Activated naive CD4-positive, alpha-beta T cell treated with anti-CD3 and anti-CD28 coated beads for 36 hours (primary cell): ENCODE measurements at regions of chr3 and their contacts with region 1.

Region 1: DNA sequence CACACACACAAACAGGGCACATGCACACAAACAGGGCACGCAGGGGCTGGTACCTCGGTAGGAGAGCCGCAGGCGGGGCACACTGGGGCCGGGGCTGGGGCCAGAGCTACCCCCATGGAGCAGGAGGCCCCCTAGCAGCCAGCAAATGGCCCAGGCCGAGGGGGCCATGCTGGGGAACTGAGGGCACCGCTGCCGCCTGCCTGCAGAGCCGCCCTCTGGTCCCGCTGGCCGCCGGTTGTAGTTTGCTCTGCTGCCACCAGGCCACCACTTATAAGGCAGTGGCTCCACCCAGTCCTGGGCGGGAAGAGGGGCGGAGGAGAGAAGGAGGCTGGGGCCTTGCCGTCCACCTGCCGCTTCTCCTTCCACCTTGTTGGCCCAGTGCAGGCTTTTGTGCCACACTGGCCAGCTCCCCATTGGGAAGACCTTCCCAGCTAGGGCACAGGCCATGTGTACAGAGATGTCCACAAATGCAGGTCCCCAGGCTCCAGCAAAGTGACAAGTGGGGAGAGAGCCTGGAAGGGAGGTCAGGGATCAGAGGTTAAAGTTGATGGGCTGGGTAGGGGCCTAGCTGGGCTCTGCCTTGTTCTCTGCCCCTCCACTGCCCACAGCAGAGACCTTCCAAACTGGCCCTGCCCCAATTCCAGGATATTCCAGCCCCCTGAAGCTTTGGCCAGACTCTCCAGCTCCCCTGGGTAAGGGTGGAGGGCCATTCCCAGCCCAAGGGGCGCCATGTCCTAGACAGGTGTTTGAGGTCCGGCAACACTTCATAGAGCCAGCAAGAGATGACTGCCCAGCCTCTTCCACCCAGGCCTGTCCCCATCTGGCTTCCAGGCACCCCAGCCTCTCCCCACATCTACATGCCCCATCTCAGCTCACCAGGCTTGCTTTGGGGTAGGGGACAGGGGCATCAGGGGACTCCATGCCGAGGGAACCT is at the start of gene SEMA3G:
- DNase-seq: peak; percentile 80
- H3K4me3 Mint-ChIP-seq: no peak within 1 kb of the TSS
- H3K27ac Mint-ChIP-seq: no peak within 1 kb of the TSS
- H3K4me1 Mint-ChIP-seq: peaks cover 4% of the 10 kb centered on the region
- H3K27me3 Mint-ChIP-seq: no peaks in the 10 kb centered on the region
- total RNA-seq, gene SEMA3G: not detected

Region 2: GRCh38 chr3:52357151-52358080 is 87.7 kb before region 1 on chr3:
- CTCF ChIA-PET with region 1: no interaction called
- intact Hi-C with region 1: no loop called
- DNase-seq: no peak
- H3K4me3 Mint-ChIP-seq: no peak overlapping the region
- H3K27ac Mint-ChIP-seq: no peak overlapping the region
- H3K4me1 Mint-ChIP-seq: no peaks in the 10 kb centered on the region
- H3K27me3 Mint-ChIP-seq: no peaks in the 10 kb centered on the region

Region 3: GRCh38 chr3:52428151-52429005 is 16.7 kb before region 1 on chr3:
- CTCF ChIA-PET with region 1: interaction called, 81 read pairs
- intact Hi-C with region 1: loop called (anchors 1 kb)
- DNase-seq: peak; percentile 64
- H3K4me3 Mint-ChIP-seq: no peak overlapping the region
- H3K27ac Mint-ChIP-seq: no peak overlapping the region
- H3K4me1 Mint-ChIP-seq: no peaks in the 10 kb centered on the region
- H3K27me3 Mint-ChIP-seq: no peaks in the 10 kb centered on the region

Region 4: DNA sequence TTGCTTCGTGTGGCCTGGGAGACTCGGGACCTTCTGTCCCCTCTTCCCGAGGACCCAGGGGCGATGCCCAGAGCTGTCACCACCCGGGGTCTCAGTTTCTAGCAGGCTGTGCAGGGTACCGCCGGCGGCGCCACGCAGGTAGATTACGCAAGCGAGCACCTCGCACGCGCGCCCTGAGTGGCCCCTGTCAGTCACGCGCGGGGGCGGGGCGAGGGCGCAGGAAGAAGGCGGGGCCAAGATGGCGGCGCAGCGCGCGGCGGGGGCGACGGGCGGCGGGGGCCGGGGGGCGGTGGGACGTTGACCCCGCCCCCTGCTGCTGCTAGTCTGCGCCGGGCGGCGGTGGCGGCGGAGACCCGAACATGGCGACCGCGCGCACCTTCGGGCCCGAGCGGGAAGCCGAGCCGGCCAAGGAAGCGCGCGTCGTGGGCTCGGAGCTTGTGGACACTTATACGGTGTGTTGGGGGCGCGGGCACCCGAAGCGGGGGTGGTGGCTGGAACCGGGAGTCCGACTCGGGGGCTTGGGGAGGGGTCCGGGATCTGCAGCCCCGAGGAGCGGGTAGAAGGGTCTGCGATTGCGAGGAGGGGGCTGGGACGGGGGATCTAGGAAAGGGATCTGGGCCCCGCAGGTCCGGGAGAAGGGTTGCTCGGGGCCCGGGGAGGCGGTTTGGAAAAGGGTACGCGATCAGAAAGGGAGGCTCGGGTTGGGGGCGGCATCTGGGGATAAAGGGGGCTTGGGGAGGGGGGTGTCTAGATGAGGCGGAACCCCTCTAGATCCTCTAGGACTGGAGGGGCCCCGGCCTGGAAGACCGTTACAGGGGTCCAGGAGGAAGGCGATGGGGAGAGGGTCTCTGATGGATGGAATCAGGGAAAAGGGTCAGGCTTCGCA is 10.4 kb after region 1 on chr3 and contains the start of gene NISCH:
- CTCF ChIA-PET with region 1: interaction called, 34 read pairs
- intact Hi-C with region 1: no loop called
- DNase-seq: peak; percentile 96
- H3K4me3 Mint-ChIP-seq: peak within 1 kb of the TSS; percentile 94
- H3K27ac Mint-ChIP-seq: peak within 1 kb of the TSS; percentile 96
- H3K4me1 Mint-ChIP-seq: peaks cover 35% of the 10 kb centered on the region
- H3K27me3 Mint-ChIP-seq: no peaks in the 10 kb centered on the region
- total RNA-seq, gene NISCH: 50.4 to 52.5 TPM